Naive thymus-derived CD4-positive, alpha-beta T cell (primary cell): ENCODE measurements at regions of chr6 and their contacts with region 1.

Region 1: DNA sequence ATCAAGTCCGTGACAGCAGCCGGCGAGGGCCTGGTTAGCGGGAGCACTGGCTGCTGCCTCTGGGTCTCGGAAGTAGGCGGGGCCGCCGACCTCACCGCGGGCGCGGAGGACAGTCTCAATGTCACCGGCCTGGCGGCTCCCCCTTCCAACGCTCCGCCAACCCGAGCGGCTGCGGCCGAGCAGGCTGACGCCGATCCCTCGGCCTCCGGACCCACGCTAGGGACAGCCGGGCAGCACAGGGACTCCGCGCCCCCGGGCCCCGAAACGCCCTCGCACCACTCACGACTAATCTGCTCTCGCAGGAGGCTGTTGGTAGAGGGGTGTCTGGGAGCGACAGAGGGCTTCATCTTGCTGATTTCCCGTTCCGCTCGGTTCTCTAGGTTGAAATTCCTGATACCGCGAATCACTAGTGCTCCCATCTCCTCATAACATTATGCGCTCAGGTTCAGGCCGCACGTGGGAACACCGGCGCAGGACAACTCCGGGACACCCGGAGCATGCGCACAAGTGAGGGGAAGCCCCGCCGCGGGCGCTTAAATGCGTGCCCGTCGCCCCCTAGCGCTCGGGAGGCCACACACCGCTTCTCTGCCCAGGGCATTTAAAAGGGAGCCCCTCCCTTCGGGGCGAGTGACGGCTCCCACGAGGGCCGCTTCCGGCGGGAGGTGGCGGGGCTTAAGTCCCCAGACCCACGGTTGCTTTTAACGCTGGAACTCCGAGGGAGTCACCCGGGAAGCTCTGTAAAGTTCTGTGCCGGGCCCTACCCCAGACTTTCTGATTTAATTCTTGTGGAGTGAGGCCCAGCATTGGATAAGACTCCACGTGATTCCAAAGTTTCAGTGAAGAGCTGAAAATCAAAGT is at the start of gene NDUFAF4:
- DNase-seq: peak; percentile 92 to 97 (median 94)
- ATAC-seq: peak; percentile 98
- H3K4me3 ChIP-seq: peak within 1 kb of the TSS; percentile 88
- H3K4me3 Mint-ChIP-seq: peak within 1 kb of the TSS; percentile 85 to 99 (median 91)
- H3K27ac ChIP-seq: peak within 1 kb of the TSS; percentile 95
- H3K27ac Mint-ChIP-seq: peak within 1 kb of the TSS; percentile 56 to 99 (median 88)
- H3K4me1 ChIP-seq: peaks cover 18 to 20% of the 10 kb centered on the region in 2 donors
- H3K4me1 Mint-ChIP-seq: peaks cover 17 to 48% (median 39%) of the 10 kb centered on the region in 7 donors
- H3K27me3 ChIP-seq: no peaks in the 10 kb centered on the region
- H3K27me3 Mint-ChIP-seq: peaks cover 0 to 14% (median 12%) of the 10 kb centered on the region in 5 donors
- total RNA-seq, gene NDUFAF4: 25.1 to 34.2 (median 28.4) TPM

Region 2: DNA sequence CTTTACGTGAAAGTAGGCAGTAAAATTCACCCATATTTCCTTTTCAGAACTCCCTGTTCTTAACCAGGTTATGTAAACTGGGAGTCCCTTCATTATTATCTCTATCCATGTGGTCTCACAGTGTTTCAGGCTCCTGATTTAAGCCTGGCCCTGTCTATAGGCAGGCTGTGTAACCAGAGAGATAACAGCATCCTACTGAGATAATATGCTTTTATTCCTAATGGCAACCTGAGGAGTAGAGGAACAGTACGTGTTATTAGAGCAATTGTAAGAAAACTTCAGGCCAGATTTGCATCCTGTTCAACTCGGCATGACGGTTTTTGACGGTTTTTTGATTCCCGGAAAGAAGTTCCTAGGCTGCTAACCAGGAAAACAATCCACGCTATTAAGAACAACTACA is 865.0 kb before region 1 on chr6:
- CTCF ChIA-PET with region 1: no interaction called
- POLR2A ChIA-PET with region 1: no interaction called
- intact Hi-C with region 1: no loop called
- DNase-seq: no peak
- ATAC-seq: no peak
- H3K4me3 ChIP-seq: no peak overlapping the region
- H3K4me3 Mint-ChIP-seq: no peak overlapping the region
- H3K27ac ChIP-seq: no peak overlapping the region
- H3K27ac Mint-ChIP-seq: no peak overlapping the region
- H3K4me1 ChIP-seq: no peaks in the 10 kb centered on the region
- H3K4me1 Mint-ChIP-seq: no peaks in the 10 kb centered on the region
- H3K27me3 ChIP-seq: no peaks in the 10 kb centered on the region
- H3K27me3 Mint-ChIP-seq: no peaks in the 10 kb centered on the region

Region 3: DNA sequence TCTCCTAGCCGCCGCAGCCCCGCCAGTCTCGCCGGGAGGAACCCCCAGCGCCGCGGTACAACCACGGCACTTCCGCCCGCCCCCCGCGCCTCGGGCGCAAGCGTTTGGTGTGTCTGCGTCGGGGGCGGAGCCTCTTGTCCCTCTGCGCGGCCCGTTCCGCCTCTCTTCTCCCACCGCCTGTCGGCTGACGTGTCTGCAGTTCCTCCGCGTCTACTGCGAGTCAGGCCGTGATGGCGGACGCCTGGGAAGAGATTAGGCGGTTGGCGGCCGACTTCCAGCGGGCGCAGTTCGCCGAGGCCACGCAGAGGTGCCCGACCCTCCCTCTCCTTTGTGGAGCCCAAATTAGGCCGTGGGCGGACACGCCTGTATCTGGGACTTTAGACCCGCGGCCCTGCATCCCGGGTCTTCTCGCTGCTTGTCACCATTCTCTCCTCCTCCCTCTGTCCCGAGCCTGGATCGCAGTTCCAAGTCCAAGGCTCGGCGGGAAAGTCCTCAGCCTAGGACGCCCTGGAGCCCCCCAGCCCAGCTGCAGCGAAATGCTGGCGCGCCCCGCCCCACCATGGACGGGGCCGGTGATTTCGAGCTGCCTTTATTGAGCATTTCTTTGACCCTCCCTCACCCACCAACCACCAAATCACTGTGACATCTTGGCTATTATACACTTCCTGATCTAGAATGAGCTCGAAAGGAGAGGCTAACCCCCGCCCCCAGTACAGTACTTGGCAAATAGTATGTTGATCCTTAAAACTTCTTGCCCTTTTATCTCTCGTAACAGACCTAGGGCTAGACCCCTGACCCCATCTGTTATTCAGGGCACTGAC is 375.8 kb before region 1 on chr6 and contains the start of gene UFL1:
- CTCF ChIA-PET with region 1: no interaction called
- POLR2A ChIA-PET with region 1: interaction called, 3 read pairs
- intact Hi-C with region 1: loop called (anchors 1 kb)
- DNase-seq: peak; percentile 84 to 97 (median 93)
- ATAC-seq: peak; percentile 97
- H3K4me3 ChIP-seq: peak within 1 kb of the TSS; percentile 98
- H3K4me3 Mint-ChIP-seq: peak within 1 kb of the TSS; percentile 96 to 100 (median 98)
- H3K27ac ChIP-seq: peak within 1 kb of the TSS; percentile 98
- H3K27ac Mint-ChIP-seq: peak within 1 kb of the TSS; percentile 98 to 100 (median 100)
- H3K4me1 ChIP-seq: peaks cover 13 to 19% of the 10 kb centered on the region in 2 donors
- H3K4me1 Mint-ChIP-seq: peaks cover 11 to 49% (median 35%) of the 10 kb centered on the region in 7 donors
- H3K27me3 ChIP-seq: no peaks in the 10 kb centered on the region
- H3K27me3 Mint-ChIP-seq: no peaks in the 10 kb centered on the region
- total RNA-seq, gene UFL1: 15.0 to 34.9 (median 22.2) TPM

Region 4: GRCh38 chr6:96626759-96627364 is 270.8 kb before region 1 on chr6:
- CTCF ChIA-PET with region 1: no interaction called
- POLR2A ChIA-PET with region 1: no interaction called
- intact Hi-C with region 1: loop called (anchors 1 kb)
- DNase-seq: peak in 5 of 9 donors; percentile 7 to 33 (median 13)
- ATAC-seq: peak; percentile 46
- H3K4me3 ChIP-seq: no peak overlapping the region
- H3K4me3 Mint-ChIP-seq: no peak overlapping the region
- H3K27ac ChIP-seq: no peak overlapping the region
- H3K27ac Mint-ChIP-seq: no peak overlapping the region
- H3K4me1 ChIP-seq: no peaks in the 10 kb centered on the region
- H3K4me1 Mint-ChIP-seq: peaks cover 0 to 3% (median 0%) of the 10 kb centered on the region in 7 donors
- H3K27me3 ChIP-seq: no peaks in the 10 kb centered on the region
- H3K27me3 Mint-ChIP-seq: peaks cover 5 to 23% (median 14%) of the 10 kb centered on the region in 5 donors

Region 5: DNA sequence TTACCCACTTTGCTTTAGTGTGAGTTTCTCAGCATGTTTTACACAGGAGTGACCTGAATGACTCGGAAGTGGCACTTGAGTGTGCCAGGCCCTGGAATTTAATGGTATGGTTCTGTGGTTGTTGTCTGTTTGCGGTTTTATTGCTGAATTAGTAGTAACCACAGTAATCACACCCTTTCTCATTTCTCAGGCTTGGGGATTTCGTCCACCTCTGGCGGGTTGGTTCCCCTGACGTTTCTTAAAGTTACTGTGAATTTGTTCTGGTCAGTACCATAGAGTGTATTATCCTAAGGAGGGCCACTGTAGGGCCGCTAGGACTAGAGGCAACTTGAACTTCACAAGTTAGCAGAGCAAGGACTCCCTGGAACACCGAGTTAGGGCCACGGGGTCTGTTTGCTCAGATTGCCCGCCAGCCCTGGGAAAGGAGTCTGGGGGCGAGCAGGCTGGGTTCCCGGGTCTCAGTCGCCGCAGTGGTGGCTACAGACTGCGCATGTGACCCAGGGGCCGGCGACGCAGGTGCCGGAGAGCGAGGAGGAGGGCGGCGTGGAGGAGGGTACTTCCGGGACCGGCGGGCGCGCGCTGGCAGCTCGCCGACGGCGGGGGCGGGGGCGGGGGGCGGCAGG is 26.4 kb after region 1 on chr6:
- CTCF ChIA-PET with region 1: interaction called, 7 read pairs
- POLR2A ChIA-PET with region 1: interaction called, 30 read pairs
- intact Hi-C with region 1: loop called (anchors 1 kb)
- DNase-seq: peak in 1 of 9 donors; percentile 5
- ATAC-seq: peak; percentile 3
- H3K4me3 ChIP-seq: peak overlapping the region; percentile 68
- H3K4me3 Mint-ChIP-seq: peak overlapping the region; percentile 91 to 99 (median 98)
- H3K27ac ChIP-seq: peak overlapping the region; percentile 87
- H3K27ac Mint-ChIP-seq: peak overlapping the region; percentile 91 to 100 (median 99)
- H3K4me1 ChIP-seq: peaks cover 13 to 16% of the 10 kb centered on the region in 2 donors
- H3K4me1 Mint-ChIP-seq: peaks cover 8 to 50% (median 33%) of the 10 kb centered on the region in 7 donors
- H3K27me3 ChIP-seq: no peaks in the 10 kb centered on the region
- H3K27me3 Mint-ChIP-seq: peaks cover 0 to 22% (median 4%) of the 10 kb centered on the region in 5 donors

Region 6: GRCh38 chr6:97059473-97059872 is 161.9 kb after region 1 on chr6:
- CTCF ChIA-PET with region 1: interaction called, 3 read pairs
- POLR2A ChIA-PET with region 1: no interaction called
- intact Hi-C with region 1: loop called (anchors 1 kb)
- DNase-seq: peak in 5 of 9 donors; percentile 25 to 41 (median 29)
- ATAC-seq: peak; percentile 45
- H3K4me3 ChIP-seq: no peak overlapping the region
- H3K4me3 Mint-ChIP-seq: no peak overlapping the region
- H3K27ac ChIP-seq: no peak overlapping the region
- H3K27ac Mint-ChIP-seq: no peak overlapping the region
- H3K4me1 ChIP-seq: no peaks in the 10 kb centered on the region
- H3K4me1 Mint-ChIP-seq: peaks cover 0 to 4% (median 0%) of the 10 kb centered on the region in 7 donors
- H3K27me3 ChIP-seq: no peaks in the 10 kb centered on the region
- H3K27me3 Mint-ChIP-seq: peaks cover 0 to 3% (median 0%) of the 10 kb centered on the region in 5 donors

Region 7: GRCh38 chr6:97394160-97394748 is 496.6 kb after region 1 on chr6:
- CTCF ChIA-PET with region 1: no interaction called
- POLR2A ChIA-PET with region 1: no interaction called
- intact Hi-C with region 1: loop called in 1 of 2 experiments (anchors 5 kb)
- DNase-seq: peak in 8 of 9 donors; percentile 16 to 63 (median 48)
- ATAC-seq: peak; percentile 92
- H3K4me3 ChIP-seq: no peak overlapping the region
- H3K4me3 Mint-ChIP-seq: no peak overlapping the region
- H3K27ac ChIP-seq: no peak overlapping the region
- H3K27ac Mint-ChIP-seq: no peak overlapping the region
- H3K4me1 ChIP-seq: no peaks in the 10 kb centered on the region
- H3K4me1 Mint-ChIP-seq: peaks cover 0 to 2% (median 0%) of the 10 kb centered on the region in 7 donors
- H3K27me3 ChIP-seq: no peaks in the 10 kb centered on the region
- H3K27me3 Mint-ChIP-seq: peaks cover 10 to 46% (median 21%) of the 10 kb centered on the region in 5 donors